ENCODE measurements at regions of chr5 and their contacts with region 1.

Region 1: GRCh38 chr5:157761690-157762621 is 18.4 kb downstream of the LSM11 start:
- DNase-seq: peak; percentile 76
- H3K4me3 Mint-ChIP-seq: no peak overlapping the region
- H3K27ac Mint-ChIP-seq: no peak overlapping the region
- H3K4me1 Mint-ChIP-seq: peaks cover 3% of the 10 kb centered on the region
- H3K27me3 Mint-ChIP-seq: peaks cover 4% of the 10 kb centered on the region

Region 2: DNA sequence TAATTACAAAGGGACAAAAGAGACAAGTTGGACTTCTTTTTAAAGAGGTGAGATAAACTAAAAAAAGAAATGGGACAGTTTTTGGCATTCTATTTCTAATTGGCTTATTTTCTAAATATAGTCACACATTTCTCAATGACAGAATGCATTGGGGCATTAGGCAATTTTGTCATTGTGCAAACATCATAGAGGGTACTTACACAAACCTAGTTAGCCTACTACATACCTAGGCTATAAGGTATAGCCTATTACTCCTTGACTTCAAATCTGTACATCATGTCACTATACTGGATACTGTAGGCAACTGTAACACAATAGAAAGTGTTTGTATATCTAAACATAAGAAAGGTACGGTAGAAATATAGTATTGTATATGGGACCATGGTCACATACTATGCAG is 37.6 kb after region 1 on chr5:
- intact Hi-C with region 1: no loop called
- DNase-seq: no peak
- H3K4me3 Mint-ChIP-seq: no peak overlapping the region
- H3K27ac Mint-ChIP-seq: no peak overlapping the region
- H3K4me1 Mint-ChIP-seq: no peaks in the 10 kb centered on the region
- H3K27me3 Mint-ChIP-seq: no peaks in the 10 kb centered on the region

Region 3: DNA sequence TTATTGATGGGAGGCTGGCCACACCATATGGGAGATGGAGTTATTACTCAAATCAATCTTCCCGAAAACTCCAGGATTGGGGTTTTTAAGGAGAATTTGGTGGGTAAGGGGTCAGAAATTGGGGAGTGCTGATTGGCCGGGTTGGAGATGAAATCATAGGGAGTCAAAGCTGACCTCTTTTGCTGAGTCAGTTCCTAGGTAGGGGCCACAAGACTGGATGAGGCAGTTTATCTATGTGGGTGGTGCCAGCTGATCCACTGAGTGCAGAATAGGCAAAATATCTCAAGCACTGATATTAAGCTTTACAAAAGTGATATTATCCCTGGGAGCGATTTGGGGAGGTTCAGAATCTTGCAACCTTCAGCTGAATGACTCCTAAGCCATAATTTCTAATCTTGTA is 172.6 kb after region 1 on chr5:
- intact Hi-C with region 1: no loop called
- DNase-seq: no peak
- H3K4me3 Mint-ChIP-seq: no peak overlapping the region
- H3K27ac Mint-ChIP-seq: no peak overlapping the region
- H3K4me1 Mint-ChIP-seq: no peaks in the 10 kb centered on the region
- H3K27me3 Mint-ChIP-seq: no peaks in the 10 kb centered on the region

Region 4: DNA sequence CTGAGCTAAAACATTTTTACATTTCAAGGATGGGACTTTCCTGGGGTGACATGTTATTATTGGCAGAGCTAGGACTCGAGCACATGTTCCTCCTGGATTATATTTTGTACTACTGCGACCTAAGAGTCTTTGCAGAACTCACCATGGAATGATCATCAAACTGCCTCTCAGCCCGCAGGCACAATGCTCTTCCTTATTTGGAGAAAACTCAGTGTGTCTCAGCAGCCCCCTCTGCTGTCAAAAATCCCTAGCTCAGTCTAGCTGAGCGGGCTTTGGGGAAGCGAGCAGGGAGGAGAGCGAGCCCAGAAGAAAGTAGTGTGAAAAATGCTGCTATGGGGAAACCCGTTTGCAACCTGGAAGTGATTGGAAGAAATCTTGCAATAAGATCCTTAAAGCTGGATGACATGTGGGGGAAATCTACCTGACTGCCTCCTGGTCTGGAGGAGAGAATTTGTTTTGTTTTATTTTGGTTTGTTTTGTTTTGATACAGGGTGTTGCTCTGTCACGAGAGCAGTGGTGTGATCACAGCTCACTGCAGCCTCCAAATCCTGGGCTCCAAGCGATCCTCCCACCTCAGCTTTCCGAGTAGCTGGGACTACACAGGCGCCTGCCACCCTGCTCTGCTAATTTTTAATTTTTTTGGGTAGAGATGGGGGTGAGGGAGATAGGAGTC is 186.9 kb after region 1 on chr5:
- intact Hi-C with region 1: loop called (anchors 1 kb)
- DNase-seq: peak; percentile 94
- H3K4me3 Mint-ChIP-seq: no peak overlapping the region
- H3K27ac Mint-ChIP-seq: no peak overlapping the region
- H3K4me1 Mint-ChIP-seq: peaks cover 3% of the 10 kb centered on the region
- H3K27me3 Mint-ChIP-seq: peaks cover 12% of the 10 kb centered on the region

Region 5: GRCh38 chr5:157994906-157995519 is 233.1 kb after region 1 on chr5:
- intact Hi-C with region 1: loop called (anchors 1 kb)
- DNase-seq: peak; percentile 85
- H3K4me3 Mint-ChIP-seq: peak overlapping the region; percentile 56
- H3K27ac Mint-ChIP-seq: no peak overlapping the region
- H3K4me1 Mint-ChIP-seq: peaks cover 15% of the 10 kb centered on the region
- H3K27me3 Mint-ChIP-seq: peaks cover 35% of the 10 kb centered on the region

Region 6: GRCh38 chr5:158354958-158355357 is 593.0 kb after region 1 on chr5:
- intact Hi-C with region 1: no loop called
- DNase-seq: no peak
- H3K4me3 Mint-ChIP-seq: no peak overlapping the region
- H3K27ac Mint-ChIP-seq: no peak overlapping the region
- H3K4me1 Mint-ChIP-seq: no peaks in the 10 kb centered on the region
- H3K27me3 Mint-ChIP-seq: peaks cover 2% of the 10 kb centered on the region